CD8-positive, alpha-beta memory T cell (primary cell): ENCODE measurements at regions of chr19 and their contacts with region 1.

Region 1: GRCh38 chr19:17282488-17283255 is 971 bp downstream of the ANKLE1 start:
- DNase-seq: peak; percentile 65 to 81 (median 72)
- H3K4me3 ChIP-seq: peak overlapping the region; percentile 70
- H3K4me3 Mint-ChIP-seq: peak overlapping the region; percentile 36 to 85 (median 82)
- H3K27ac ChIP-seq: no peak overlapping the region
- H3K27ac Mint-ChIP-seq: peak overlapping the region in 1 of 8 donors; percentile 26
- H3K4me1 ChIP-seq: peaks cover 9% of the 10 kb centered on the region
- H3K4me1 Mint-ChIP-seq: peaks cover 4 to 10% (median 4%) of the 10 kb centered on the region in 3 donors
- H3K27me3 ChIP-seq: no peaks in the 10 kb centered on the region
- H3K27me3 Mint-ChIP-seq: peaks cover 0 to 4% of the 10 kb centered on the region in 2 donors

Region 2: DNA sequence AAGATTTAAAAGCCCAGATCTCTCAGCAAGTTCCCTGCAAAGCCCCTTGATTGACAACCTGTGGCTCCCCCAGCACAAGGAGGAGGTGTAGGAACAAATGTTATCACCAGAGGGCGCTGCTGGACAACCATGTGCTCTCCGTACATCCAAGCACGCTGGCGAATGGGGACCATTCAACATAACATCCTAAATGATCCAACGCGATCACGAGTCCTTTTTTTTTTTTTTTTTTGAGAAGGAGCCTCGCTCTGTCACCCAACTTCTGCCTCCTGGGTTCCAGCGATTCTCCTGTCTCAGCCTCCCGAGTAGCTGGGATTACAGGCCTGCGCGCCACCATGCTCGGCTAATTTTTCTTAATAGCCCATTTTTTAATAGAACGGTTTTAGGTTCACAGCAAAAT is 511.1 kb before region 1 on chr19:
- CTCF ChIA-PET with region 1: interaction called, 24 read pairs
- POLR2A ChIA-PET with region 1: no interaction called
- DNase-seq: peak; percentile 51 to 77 (median 62)
- H3K4me3 ChIP-seq: no peak overlapping the region
- H3K4me3 Mint-ChIP-seq: no peak overlapping the region
- H3K27ac ChIP-seq: no peak overlapping the region
- H3K27ac Mint-ChIP-seq: no peak overlapping the region
- H3K4me1 ChIP-seq: no peaks in the 10 kb centered on the region
- H3K4me1 Mint-ChIP-seq: no peaks in the 10 kb centered on the region
- H3K27me3 ChIP-seq: no peaks in the 10 kb centered on the region
- H3K27me3 Mint-ChIP-seq: peaks cover 9 to 52% of the 10 kb centered on the region in 2 donors

Region 3: DNA sequence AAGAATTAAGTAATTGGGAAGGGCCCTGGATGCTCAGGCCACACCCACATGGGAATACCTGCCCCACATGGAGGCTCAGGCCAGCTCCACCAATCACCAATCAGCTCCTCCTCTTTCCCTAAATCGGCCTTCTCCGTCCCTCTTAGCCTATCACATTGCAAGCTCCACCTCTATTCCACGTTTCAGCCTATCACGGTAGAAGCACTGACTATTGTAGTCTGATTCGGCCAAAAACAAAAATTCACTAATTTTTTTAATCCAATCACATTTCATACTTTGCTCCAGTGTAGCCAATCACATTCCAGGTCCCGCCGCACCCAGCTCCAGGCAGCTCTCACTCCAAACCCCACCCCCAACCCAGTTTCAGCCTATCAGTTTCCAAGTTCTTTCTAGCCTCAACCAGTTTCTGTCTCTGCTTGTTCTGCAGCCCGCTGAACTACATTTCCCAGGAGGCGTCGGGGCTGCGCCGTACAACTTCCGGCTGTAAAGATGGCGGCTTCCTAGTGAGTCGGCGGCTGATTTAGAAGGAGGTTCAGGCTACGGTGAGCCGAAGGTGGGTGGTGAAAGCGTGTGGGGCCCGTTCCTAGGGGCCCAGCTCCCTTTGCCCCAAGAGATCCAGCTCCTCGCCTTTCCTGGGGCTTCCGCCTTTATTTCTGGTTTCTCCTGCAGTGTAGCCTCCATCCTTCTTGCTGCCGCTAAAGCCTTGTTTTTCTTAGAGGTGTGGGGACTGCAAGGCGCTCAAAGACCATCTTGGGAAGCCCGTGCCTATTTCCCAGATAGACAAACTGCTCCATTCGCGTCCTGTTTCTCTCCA is 15.5 kb before region 1 on chr19 and contains the start of gene BABAM1:
- CTCF ChIA-PET with region 1: interaction called, 93 read pairs
- POLR2A ChIA-PET with region 1: interaction called, 4 read pairs
- DNase-seq: peak; percentile 87 to 98 (median 96)
- H3K4me3 ChIP-seq: peak within 1 kb of the TSS; percentile 96
- H3K4me3 Mint-ChIP-seq: peak within 1 kb of the TSS; percentile 77 to 90 (median 83)
- H3K27ac ChIP-seq: peak within 1 kb of the TSS; percentile 85
- H3K27ac Mint-ChIP-seq: peak within 1 kb of the TSS; percentile 73 to 92 (median 76)
- H3K4me1 ChIP-seq: peaks cover 21% of the 10 kb centered on the region
- H3K4me1 Mint-ChIP-seq: peaks cover 18 to 25% (median 18%) of the 10 kb centered on the region in 3 donors
- H3K27me3 ChIP-seq: no peaks in the 10 kb centered on the region
- H3K27me3 Mint-ChIP-seq: no peaks in the 10 kb centered on the region
- total RNA-seq, gene BABAM1: 124 to 132 TPM

Region 4: GRCh38 chr19:17334414-17335409 is 52.0 kb after region 1 on chr19 and contains the start of gene ANO8:
- CTCF ChIA-PET with region 1: no interaction called
- POLR2A ChIA-PET with region 1: no interaction called
- DNase-seq: peak; percentile 87 to 96 (median 93)
- H3K4me3 ChIP-seq: peak within 1 kb of the TSS; percentile 82
- H3K4me3 Mint-ChIP-seq: peak within 1 kb of the TSS; percentile 88 to 94 (median 90)
- H3K27ac ChIP-seq: peak within 1 kb of the TSS; percentile 74
- H3K27ac Mint-ChIP-seq: peak within 1 kb of the TSS; percentile 80 to 89 (median 86)
- H3K4me1 ChIP-seq: peaks cover 25% of the 10 kb centered on the region
- H3K4me1 Mint-ChIP-seq: peaks cover 31 to 58% (median 33%) of the 10 kb centered on the region in 3 donors
- H3K27me3 ChIP-seq: no peaks in the 10 kb centered on the region
- H3K27me3 Mint-ChIP-seq: no peaks in the 10 kb centered on the region
- total RNA-seq, gene ANO8: 4.1 to 5.1 TPM

Region 5: DNA sequence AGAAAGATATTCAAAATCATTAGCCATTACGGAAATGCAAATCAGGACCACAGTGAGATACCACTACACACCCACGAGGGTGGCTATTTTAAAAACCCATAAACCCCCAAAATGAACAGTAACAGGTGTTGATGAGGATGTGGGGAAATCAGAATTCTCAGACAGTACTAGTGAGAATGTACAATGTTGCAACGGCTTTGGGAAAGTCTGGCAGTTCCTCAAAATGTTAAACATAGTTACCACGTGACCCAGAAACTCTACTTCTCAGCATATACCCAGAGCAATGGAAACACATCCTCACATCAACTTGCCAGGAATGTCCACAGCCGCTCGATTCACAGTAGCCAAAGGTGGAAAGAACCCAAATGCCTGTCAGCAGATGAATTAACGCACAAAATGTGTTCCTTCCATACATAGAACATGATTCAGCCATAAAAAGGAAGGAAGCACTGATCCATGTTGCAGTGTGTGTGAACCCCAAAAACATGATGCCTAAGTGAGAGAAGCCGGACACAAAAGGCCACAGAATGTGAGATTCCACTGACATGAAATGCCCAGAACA is 87.4 kb after region 1 on chr19:
- CTCF ChIA-PET with region 1: no interaction called
- POLR2A ChIA-PET with region 1: no interaction called
- DNase-seq: no peak
- H3K4me3 ChIP-seq: no peak overlapping the region
- H3K4me3 Mint-ChIP-seq: no peak overlapping the region
- H3K27ac ChIP-seq: no peak overlapping the region
- H3K27ac Mint-ChIP-seq: no peak overlapping the region
- H3K4me1 ChIP-seq: no peaks in the 10 kb centered on the region
- H3K4me1 Mint-ChIP-seq: peaks cover 0 to 5% (median 0%) of the 10 kb centered on the region in 3 donors
- H3K27me3 ChIP-seq: no peaks in the 10 kb centered on the region
- H3K27me3 Mint-ChIP-seq: peaks cover 13 to 25% of the 10 kb centered on the region in 2 donors